ENCODE measurements at regions of chr2 and their contacts with region 1.

Region 1: GRCh38 chr2:73640511-73640911 is 1.7 kb downstream of the NAT8 start:
- DNase-seq: peak; percentile 60
- ATAC-seq: peak; percentile 46
- H3K4me3 ChIP-seq: peak overlapping the region; percentile 46 to 70 (median 50)
- H3K27ac ChIP-seq: peak overlapping the region; percentile 24
- H3K4me1 ChIP-seq: peaks cover 49% of the 10 kb centered on the region
- H3K27me3 ChIP-seq: no peaks in the 10 kb centered on the region
- CTCF ChIP-seq: no peak
- EP300 ChIP-seq: no peak
- POLR2A ChIP-seq: no peak
- RAD21 ChIP-seq: no peak

Region 2: GRCh38 chr2:73700131-73700611 is 59.7 kb after region 1 on chr2:
- CTCF ChIA-PET with region 1: no interaction called
- POLR2A ChIA-PET with region 1: no interaction called
- in situ Hi-C with region 1: loop called (anchors 5 kb)
- intact Hi-C with region 1: no loop called
- DNase-seq: no peak
- ATAC-seq: no peak
- H3K4me3 ChIP-seq: no peak overlapping the region
- H3K27ac ChIP-seq: no peak overlapping the region
- H3K4me1 ChIP-seq: peaks cover 22% of the 10 kb centered on the region
- H3K27me3 ChIP-seq: peaks cover 0 to 16% of the 10 kb centered on the region in 2 experiments; a peak in 2 of 5 replicates
- CTCF ChIP-seq: no peak
- EP300 ChIP-seq: no peak
- POLR2A ChIP-seq: no peak
- RAD21 ChIP-seq: no peak

Measured in HepG2 (cell line).